ENCODE measurements at regions of chr15 and their contacts with region 1.

Region 1: GRCh38 chr15:38610748-38611147 is 46.1 kb upstream of the RASGRP1 start:
- DNase-seq: peak; percentile 80
- H3K4me3 Mint-ChIP-seq: peak overlapping the region; percentile 37
- H3K27ac Mint-ChIP-seq: peak overlapping the region; percentile 99
- H3K4me1 Mint-ChIP-seq: peaks cover 83% of the 10 kb centered on the region
- H3K27me3 Mint-ChIP-seq: no peaks in the 10 kb centered on the region

Region 2: GRCh38 chr15:37819191-37819590 is 791.6 kb before region 1 on chr15:
- CTCF ChIA-PET with region 1: no interaction called
- POLR2A ChIA-PET with region 1: no interaction called
- intact Hi-C with region 1: no loop called
- DNase-seq: no peak
- H3K4me3 Mint-ChIP-seq: no peak overlapping the region
- H3K27ac Mint-ChIP-seq: no peak overlapping the region
- H3K4me1 Mint-ChIP-seq: no peaks in the 10 kb centered on the region
- H3K27me3 Mint-ChIP-seq: peaks cover 2% of the 10 kb centered on the region

Region 3: DNA sequence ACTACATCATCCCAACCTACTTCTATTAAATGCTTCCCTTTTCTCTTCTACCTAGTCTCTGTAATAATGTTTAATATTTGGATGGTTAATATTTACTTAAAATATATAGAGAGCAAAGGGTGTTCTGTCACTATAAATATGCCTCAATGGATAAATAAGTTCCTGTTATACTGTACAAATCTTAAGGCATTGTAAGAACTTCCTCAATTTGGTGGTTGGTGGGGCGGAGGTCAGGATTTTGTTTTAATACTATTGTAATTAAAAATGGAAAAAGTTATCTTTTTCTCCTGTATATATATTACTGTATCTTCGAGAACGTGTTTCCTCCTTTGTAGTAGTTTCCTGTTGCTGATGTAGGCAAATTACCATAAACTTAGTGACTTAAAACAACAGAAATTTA is 316.6 kb before region 1 on chr15:
- CTCF ChIA-PET with region 1: no interaction called
- POLR2A ChIA-PET with region 1: no interaction called
- intact Hi-C with region 1: no loop called
- DNase-seq: no peak
- H3K4me3 Mint-ChIP-seq: no peak overlapping the region
- H3K27ac Mint-ChIP-seq: no peak overlapping the region
- H3K4me1 Mint-ChIP-seq: no peaks in the 10 kb centered on the region
- H3K27me3 Mint-ChIP-seq: peaks cover 1% of the 10 kb centered on the region

Region 4: GRCh38 chr15:38490242-38490922 is 120.4 kb before region 1 on chr15:
- CTCF ChIA-PET with region 1: no interaction called
- POLR2A ChIA-PET with region 1: no interaction called
- intact Hi-C with region 1: loop called (anchors 2 kb)
- DNase-seq: no peak
- H3K4me3 Mint-ChIP-seq: no peak overlapping the region
- H3K27ac Mint-ChIP-seq: peak overlapping the region; percentile 61
- H3K4me1 Mint-ChIP-seq: peaks cover 66% of the 10 kb centered on the region
- H3K27me3 Mint-ChIP-seq: no peaks in the 10 kb centered on the region

Region 5: DNA sequence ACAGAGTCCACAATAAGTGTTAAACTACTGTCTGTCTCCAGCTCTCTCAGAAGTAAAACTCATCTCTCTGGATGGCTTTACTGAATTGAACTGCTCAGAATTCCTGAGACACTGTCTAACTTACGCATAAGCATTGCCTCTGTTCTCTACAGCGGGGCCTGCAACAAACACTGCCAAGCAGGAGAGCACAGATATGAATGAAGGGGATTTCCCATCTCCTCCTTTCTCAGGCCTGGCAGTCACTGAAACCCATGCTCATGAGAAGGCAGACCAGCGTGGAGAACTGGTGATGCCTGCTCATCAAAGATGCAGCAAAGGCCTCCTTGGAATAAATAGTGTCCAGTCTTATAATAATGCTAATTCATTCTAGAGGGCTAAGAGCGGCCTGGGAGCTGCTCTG is 56.4 kb before region 1 on chr15:
- CTCF ChIA-PET with region 1: interaction called, 154 read pairs
- POLR2A ChIA-PET with region 1: interaction called, 394 read pairs
- intact Hi-C with region 1: no loop called
- DNase-seq: peak; percentile 72
- H3K4me3 Mint-ChIP-seq: peak overlapping the region; percentile 15
- H3K27ac Mint-ChIP-seq: peak overlapping the region; percentile 99
- H3K4me1 Mint-ChIP-seq: peaks cover 89% of the 10 kb centered on the region
- H3K27me3 Mint-ChIP-seq: no peaks in the 10 kb centered on the region

Region 6: DNA sequence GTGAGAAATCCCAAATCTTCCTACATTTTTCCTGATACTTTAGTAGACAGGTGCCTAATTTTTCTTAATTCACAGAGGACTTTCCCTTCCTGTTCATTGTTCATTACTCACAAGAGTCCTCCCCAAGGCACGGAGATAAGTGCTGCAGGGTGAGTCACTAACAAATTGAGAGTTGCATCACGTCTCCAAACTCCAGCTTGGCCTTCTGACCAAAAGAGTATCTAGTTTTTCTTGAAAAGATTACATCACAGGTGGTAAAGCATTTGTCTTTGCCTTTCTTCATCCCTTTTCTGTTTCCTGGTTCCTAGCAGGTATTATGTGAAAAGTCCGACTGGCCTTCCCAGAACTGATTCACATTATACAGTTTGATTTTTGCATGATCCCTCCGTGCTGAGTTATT is 21.2 kb before region 1 on chr15:
- CTCF ChIA-PET with region 1: interaction called, 3 read pairs
- POLR2A ChIA-PET with region 1: interaction called, 5 read pairs
- intact Hi-C with region 1: loop called (anchors 1 kb)
- DNase-seq: peak; percentile 46
- H3K4me3 Mint-ChIP-seq: no peak overlapping the region
- H3K27ac Mint-ChIP-seq: peak overlapping the region; percentile 34
- H3K4me1 Mint-ChIP-seq: peaks cover 33% of the 10 kb centered on the region
- H3K27me3 Mint-ChIP-seq: no peaks in the 10 kb centered on the region

Region 7: GRCh38 chr15:38631126-38632075 is 20.7 kb after region 1 on chr15:
- CTCF ChIA-PET with region 1: interaction called, 9 read pairs
- POLR2A ChIA-PET with region 1: interaction called, 25 read pairs
- intact Hi-C with region 1: loop called (anchors 1 kb)
- DNase-seq: no peak
- H3K4me3 Mint-ChIP-seq: no peak overlapping the region
- H3K27ac Mint-ChIP-seq: peak overlapping the region; percentile 87
- H3K4me1 Mint-ChIP-seq: peaks cover 39% of the 10 kb centered on the region
- H3K27me3 Mint-ChIP-seq: no peaks in the 10 kb centered on the region

Region 8: GRCh38 chr15:38647683-38648082 is 36.9 kb after region 1 on chr15:
- CTCF ChIA-PET with region 1: interaction called, 15 read pairs
- POLR2A ChIA-PET with region 1: interaction called, 37 read pairs
- intact Hi-C with region 1: loop called (anchors 1 kb)
- DNase-seq: no peak
- H3K4me3 Mint-ChIP-seq: no peak overlapping the region
- H3K27ac Mint-ChIP-seq: no peak overlapping the region
- H3K4me1 Mint-ChIP-seq: peaks cover 74% of the 10 kb centered on the region
- H3K27me3 Mint-ChIP-seq: no peaks in the 10 kb centered on the region

Region 9: DNA sequence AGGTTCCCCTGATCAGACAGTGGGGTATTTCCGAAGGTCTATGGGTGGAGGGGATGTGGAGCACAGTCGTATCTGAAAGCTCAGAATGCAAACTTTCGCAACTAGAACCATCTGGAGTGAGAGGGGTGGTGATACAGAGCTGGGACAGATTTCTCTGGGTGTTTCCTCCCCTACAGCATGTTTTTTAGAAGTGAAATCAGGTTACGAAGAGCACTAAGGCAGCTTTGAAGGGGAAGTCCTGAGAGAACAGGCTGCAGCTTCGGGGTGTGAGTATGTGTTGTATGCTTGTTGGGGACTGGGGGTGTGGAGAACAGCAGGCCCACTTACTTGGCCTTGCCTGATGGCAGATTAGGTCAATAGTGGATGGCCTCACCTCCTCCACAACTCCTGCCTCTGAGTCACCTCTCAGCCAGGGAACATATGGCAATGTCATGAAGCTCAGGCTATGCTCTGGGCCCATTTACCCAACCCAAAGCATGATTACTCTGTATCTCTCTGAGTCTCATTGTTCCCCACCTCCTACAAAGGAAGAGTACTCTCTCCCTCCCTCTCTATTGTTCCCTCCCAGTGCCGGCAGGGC is 61.0 kb after region 1 on chr15:
- CTCF ChIA-PET with region 1: interaction called, 9 read pairs
- POLR2A ChIA-PET with region 1: interaction called, 75 read pairs
- intact Hi-C with region 1: loop called (anchors 1 kb)
- DNase-seq: peak; percentile 71
- H3K4me3 Mint-ChIP-seq: peak overlapping the region; percentile 66
- H3K27ac Mint-ChIP-seq: peak overlapping the region; percentile 97
- H3K4me1 Mint-ChIP-seq: peaks cover 78% of the 10 kb centered on the region
- H3K27me3 Mint-ChIP-seq: no peaks in the 10 kb centered on the region

Region 10: DNA sequence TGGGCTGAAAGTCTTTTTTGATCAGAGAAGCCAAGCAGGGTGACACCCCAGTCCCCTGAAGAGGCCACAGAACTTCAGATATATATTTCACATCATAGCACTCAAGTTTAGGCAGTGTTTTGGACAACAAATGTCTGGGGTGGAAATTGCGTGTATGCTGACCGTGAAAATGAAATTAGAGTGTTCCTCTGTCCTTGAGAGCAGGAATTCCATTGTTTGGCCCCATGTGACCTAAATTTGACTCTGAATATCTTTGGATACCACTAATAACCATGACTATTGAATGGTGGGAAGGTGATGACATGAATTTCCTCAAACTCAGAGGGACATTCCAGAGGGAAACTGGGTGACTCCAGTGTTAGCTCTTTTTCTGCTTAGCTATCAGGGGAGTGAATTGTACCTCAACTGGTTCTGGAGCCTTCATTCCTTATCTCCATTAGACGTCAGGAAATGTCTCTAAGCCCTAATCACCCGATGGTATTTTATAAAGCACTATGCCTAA is 217.3 kb after region 1 on chr15:
- CTCF ChIA-PET with region 1: no interaction called
- POLR2A ChIA-PET with region 1: no interaction called
- intact Hi-C with region 1: no loop called
- DNase-seq: no peak
- H3K4me3 Mint-ChIP-seq: no peak overlapping the region
- H3K27ac Mint-ChIP-seq: no peak overlapping the region
- H3K4me1 Mint-ChIP-seq: no peaks in the 10 kb centered on the region
- H3K27me3 Mint-ChIP-seq: peaks cover 6% of the 10 kb centered on the region